ENCODE measurements at regions of chr5 and their contacts with region 1.

Region 1: GRCh38 chr5:64680289-64680688 is 10.0 kb upstream of the SHISAL2B start:
- DNase-seq: no peak
- H3K4me3 ChIP-seq: no peak overlapping the region
- H3K27ac ChIP-seq: no peak overlapping the region
- H3K4me1 ChIP-seq: no peaks in the 10 kb centered on the region; a peak in 1 of 7 replicates
- H3K27me3 ChIP-seq: no peaks in the 10 kb centered on the region
- CTCF ChIP-seq: peak; percentile 49 to 64 (median 53)
- EP300 ChIP-seq: no peak
- POLR2A ChIP-seq: no peak
- RAD21 ChIP-seq: peak; percentile 39 to 63

Region 2: GRCh38 chr5:64646169-64646568 is 34.1 kb before region 1 on chr5:
- CTCF ChIA-PET with region 1: interaction called, 13 read pairs
- POLR2A ChIA-PET with region 1: no interaction called
- DNase-seq: no peak
- H3K4me3 ChIP-seq: no peak overlapping the region
- H3K27ac ChIP-seq: no peak overlapping the region
- H3K4me1 ChIP-seq: peaks cover 0 to 9% (median 4%) of the 10 kb centered on the region in 4 experiments; a peak in 2 of 7 replicates
- H3K27me3 ChIP-seq: no peaks in the 10 kb centered on the region
- CTCF ChIP-seq: no peak
- EP300 ChIP-seq: no peak
- POLR2A ChIP-seq: no peak
- RAD21 ChIP-seq: no peak

Region 3: DNA sequence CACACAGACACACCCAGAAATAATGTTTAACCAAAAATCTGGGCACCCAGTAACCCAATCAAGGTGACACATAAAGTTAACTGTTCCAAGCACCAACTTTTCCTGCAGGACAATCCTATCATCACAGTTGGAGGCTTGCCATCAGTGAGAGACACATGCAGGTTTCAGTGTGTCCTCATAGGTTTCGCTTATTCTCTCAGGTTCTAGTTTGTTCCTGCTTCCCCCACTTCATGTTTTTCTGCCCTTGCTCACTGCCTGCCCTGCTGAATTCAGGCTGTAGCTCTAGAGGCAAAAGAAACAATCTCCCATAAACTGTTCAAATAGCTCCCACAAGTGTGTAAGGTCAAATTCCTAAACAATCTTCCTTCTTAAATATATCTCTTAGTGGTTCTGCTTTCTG is 10.0 kb before region 1 on chr5:
- CTCF ChIA-PET with region 1: interaction called, 22 read pairs
- POLR2A ChIA-PET with region 1: no interaction called
- DNase-seq: no peak
- H3K4me3 ChIP-seq: no peak overlapping the region
- H3K27ac ChIP-seq: no peak overlapping the region
- H3K4me1 ChIP-seq: no peaks in the 10 kb centered on the region
- H3K27me3 ChIP-seq: no peaks in the 10 kb centered on the region
- CTCF ChIP-seq: no peak
- EP300 ChIP-seq: no peak
- POLR2A ChIP-seq: no peak
- RAD21 ChIP-seq: no peak

Region 4: GRCh38 chr5:64707191-64707590 is 26.9 kb after region 1 on chr5:
- CTCF ChIA-PET with region 1: interaction called, 11 read pairs
- POLR2A ChIA-PET with region 1: no interaction called
- DNase-seq: no peak
- H3K4me3 ChIP-seq: no peak overlapping the region
- H3K27ac ChIP-seq: no peak overlapping the region
- H3K4me1 ChIP-seq: peaks cover 0 to 5% (median under 1%) of the 10 kb centered on the region in 4 experiments; a peak in 4 of 7 replicates
- H3K27me3 ChIP-seq: no peaks in the 10 kb centered on the region
- CTCF ChIP-seq: no peak
- EP300 ChIP-seq: no peak
- POLR2A ChIP-seq: no peak
- RAD21 ChIP-seq: no peak

Region 5: DNA sequence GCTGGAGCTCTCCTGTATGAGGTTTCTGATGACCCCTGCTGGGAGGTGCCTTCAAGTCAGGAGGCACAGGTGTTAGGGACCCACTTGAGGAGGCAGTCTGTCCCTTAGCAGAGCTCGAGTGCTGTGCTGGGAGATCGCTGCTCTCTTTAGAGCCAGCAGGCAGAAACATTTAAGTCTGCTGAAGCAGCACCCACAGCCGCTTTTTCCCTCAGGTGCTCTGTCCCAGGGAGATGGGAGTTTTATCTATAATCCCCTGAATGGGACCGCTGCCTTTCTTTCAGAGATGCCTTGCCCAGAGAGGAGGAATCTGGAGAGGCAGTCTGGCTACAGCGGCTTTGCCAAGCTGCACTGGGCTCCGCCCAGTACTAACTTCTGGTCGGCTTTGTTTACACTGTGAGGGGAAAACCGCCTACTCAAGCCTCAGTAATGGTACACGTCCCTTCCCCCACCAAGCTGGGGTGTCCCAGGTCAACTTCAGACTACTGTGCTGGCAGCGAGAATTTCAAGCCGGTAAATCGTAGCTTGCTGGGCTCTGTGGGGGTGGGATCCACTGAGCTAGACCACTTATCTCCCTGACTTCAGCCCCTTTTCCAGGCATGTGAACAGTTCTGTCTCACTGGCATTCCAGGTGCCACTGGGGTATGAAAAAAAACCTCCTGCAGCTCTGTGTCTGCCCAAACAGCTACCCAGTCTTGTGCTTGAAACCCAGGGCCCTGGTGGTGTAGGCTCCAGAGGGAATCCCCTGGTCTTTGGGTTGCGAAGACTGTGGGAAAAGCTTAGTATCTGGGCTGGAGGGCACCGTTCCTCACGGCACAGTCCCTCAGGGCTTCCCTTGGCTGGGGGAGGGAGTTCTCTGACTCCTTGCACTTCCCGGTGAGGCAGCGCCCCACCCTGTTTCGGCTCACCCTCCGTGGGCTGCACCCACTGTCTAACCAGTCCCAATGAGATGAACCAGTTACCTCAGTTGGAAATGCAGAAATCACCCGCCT is 259.5 kb after region 1 on chr5:
- CTCF ChIA-PET with region 1: no interaction called
- POLR2A ChIA-PET with region 1: no interaction called
- DNase-seq: peak in 1 of 2 experiments; percentile 53
- H3K4me3 ChIP-seq: no peak overlapping the region; a peak in 1 of 8 replicates
- H3K27ac ChIP-seq: no peak overlapping the region
- H3K4me1 ChIP-seq: peaks cover 0 to 9% (median 4%) of the 10 kb centered on the region in 4 experiments; a peak in 4 of 7 replicates
- H3K27me3 ChIP-seq: no peaks in the 10 kb centered on the region
- CTCF ChIP-seq: no peak
- EP300 ChIP-seq: no peak
- POLR2A ChIP-seq: no peak
- RAD21 ChIP-seq: no peak

Measured in H1 (cell line).